CD14-positive monocyte (primary cell): ENCODE measurements at regions of chr10 and their contacts with region 1.

Region 1: DNA sequence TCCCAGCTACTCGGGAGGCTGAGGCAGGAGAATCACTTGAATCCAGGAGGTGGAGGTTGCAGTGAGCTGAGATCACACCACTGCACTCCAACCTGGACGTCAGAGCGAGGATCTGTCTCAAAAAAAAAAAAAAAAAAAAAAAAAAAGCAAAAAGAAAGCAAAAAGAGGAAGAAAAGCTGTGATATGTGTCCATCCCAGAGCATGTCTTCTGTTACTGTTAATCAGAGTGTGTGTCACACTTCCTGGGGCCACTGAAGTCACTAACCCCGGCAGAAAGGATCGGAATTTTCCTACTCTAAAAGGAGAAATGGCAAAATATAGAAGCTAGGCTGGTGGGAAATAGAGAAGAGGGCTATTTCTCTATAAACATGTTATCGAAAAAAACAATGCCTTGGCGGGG is 11.9 kb downstream of the PIK3AP1 start:
- DNase-seq: peak; percentile 89 to 96 (median 95)
- H3K4me3 ChIP-seq: peak overlapping the region in 1 of 3 experiments; percentile 50
- H3K4me3 Mint-ChIP-seq: peak overlapping the region; percentile 54 to 76
- H3K27ac ChIP-seq: peak overlapping the region; percentile 84 to 92
- H3K27ac Mint-ChIP-seq: peak overlapping the region; percentile 95 to 99 (median 98)
- H3K4me1 ChIP-seq: peaks cover 84 to 99% of the 10 kb centered on the region in 2 donors
- H3K4me1 Mint-ChIP-seq: peaks cover 79% of the 10 kb centered on the region
- H3K27me3 ChIP-seq: no peaks in the 10 kb centered on the region
- H3K27me3 Mint-ChIP-seq: peaks cover 0 to 6% (median 0%) of the 10 kb centered on the region in 3 donors
- CTCF ChIP-seq: no peak

Region 2: GRCh38 chr10:96673318-96674099 is 34.9 kb before region 1 on chr10:
- intact Hi-C with region 1: no loop called
- DNase-seq: peak; percentile 83 to 97 (median 96)
- H3K4me3 ChIP-seq: peak overlapping the region; percentile 19 to 73 (median 69)
- H3K4me3 Mint-ChIP-seq: peak overlapping the region; percentile 78 to 90
- H3K27ac ChIP-seq: peak overlapping the region; percentile 79 to 98
- H3K27ac Mint-ChIP-seq: peak overlapping the region; percentile 97 to 100 (median 98)
- H3K4me1 ChIP-seq: peaks cover 55 to 65% of the 10 kb centered on the region in 2 donors
- H3K4me1 Mint-ChIP-seq: peaks cover 75% of the 10 kb centered on the region
- H3K27me3 ChIP-seq: no peaks in the 10 kb centered on the region
- H3K27me3 Mint-ChIP-seq: peaks cover 0 to 3% (median 0%) of the 10 kb centered on the region in 3 donors
- CTCF ChIP-seq: no peak

Region 3: DNA sequence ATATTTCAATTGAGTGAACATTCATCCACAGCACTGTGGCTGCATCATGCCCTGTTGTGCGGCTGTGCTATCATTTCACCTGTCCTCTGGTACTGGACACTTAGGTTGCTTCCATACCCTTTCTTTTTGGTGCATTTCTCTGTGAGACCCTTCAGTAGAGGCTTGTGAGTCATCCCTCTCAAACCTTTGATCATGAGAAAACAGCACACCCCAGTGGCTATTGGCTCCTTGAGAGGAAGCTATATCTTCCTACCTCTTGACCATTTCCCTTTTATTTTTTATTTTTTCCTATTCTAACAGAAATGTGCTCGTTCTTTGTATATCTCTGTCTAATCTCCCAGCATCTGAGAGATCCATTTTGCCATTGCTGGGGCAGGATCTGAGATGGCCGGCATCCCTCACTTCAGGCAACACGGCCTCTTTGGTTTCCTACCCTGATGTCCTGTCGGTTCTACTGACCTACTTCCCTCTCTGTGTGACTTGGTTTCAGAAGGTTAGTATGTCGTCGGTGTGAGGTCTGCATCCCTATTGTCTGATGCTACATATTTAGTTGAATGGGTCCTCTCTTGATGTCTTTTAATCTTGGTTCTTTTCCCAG is 35.6 kb after region 1 on chr10:
- intact Hi-C with region 1: loop called in 1 of 2 experiments (anchors 5 kb)
- DNase-seq: peak; percentile 14 to 50 (median 38)
- H3K4me3 ChIP-seq: peak overlapping the region in 1 of 3 experiments; percentile 30
- H3K4me3 Mint-ChIP-seq: peak overlapping the region in 1 of 2 donors; percentile 87
- H3K27ac ChIP-seq: peak overlapping the region in 1 of 2 donors; percentile 43
- H3K27ac Mint-ChIP-seq: peak overlapping the region; percentile 55 to 92 (median 85)
- H3K4me1 ChIP-seq: peaks cover 63 to 64% of the 10 kb centered on the region in 2 donors
- H3K4me1 Mint-ChIP-seq: peaks cover 51% of the 10 kb centered on the region
- H3K27me3 ChIP-seq: no peaks in the 10 kb centered on the region
- H3K27me3 Mint-ChIP-seq: no peaks in the 10 kb centered on the region
- CTCF ChIP-seq: peak; percentile 2

Region 4: GRCh38 chr10:96789571-96790108 is 81.2 kb after region 1 on chr10:
- intact Hi-C with region 1: no loop called
- DNase-seq: peak in 2 of 3 donors; percentile 6 to 24
- H3K4me3 ChIP-seq: no peak overlapping the region
- H3K4me3 Mint-ChIP-seq: no peak overlapping the region
- H3K27ac ChIP-seq: no peak overlapping the region
- H3K27ac Mint-ChIP-seq: peak overlapping the region in 1 of 7 donors; percentile 73
- H3K4me1 ChIP-seq: peaks cover 0 to 4% of the 10 kb centered on the region in 2 donors
- H3K4me1 Mint-ChIP-seq: peaks cover 6% of the 10 kb centered on the region
- H3K27me3 ChIP-seq: no peaks in the 10 kb centered on the region
- H3K27me3 Mint-ChIP-seq: peaks cover 0 to 6% (median 3%) of the 10 kb centered on the region in 3 donors
- CTCF ChIP-seq: no peak